Mammary epithelial cell (primary cell): ENCODE measurements at regions of chr11 and their contacts with region 1.

Region 1: GRCh38 chr11:129279326-129280026 is 87.4 kb upstream of the ARHGAP32 start:
- DNase-seq: peak; percentile 71
- H3K4me3 ChIP-seq: peak overlapping the region; percentile 68 to 73 (median 70)
- H3K27ac ChIP-seq: no peak overlapping the region
- H3K4me1 ChIP-seq: peaks cover 25% of the 10 kb centered on the region
- H3K27me3 ChIP-seq: no peaks in the 10 kb centered on the region
- CTCF ChIP-seq: no peak

Region 2: DNA sequence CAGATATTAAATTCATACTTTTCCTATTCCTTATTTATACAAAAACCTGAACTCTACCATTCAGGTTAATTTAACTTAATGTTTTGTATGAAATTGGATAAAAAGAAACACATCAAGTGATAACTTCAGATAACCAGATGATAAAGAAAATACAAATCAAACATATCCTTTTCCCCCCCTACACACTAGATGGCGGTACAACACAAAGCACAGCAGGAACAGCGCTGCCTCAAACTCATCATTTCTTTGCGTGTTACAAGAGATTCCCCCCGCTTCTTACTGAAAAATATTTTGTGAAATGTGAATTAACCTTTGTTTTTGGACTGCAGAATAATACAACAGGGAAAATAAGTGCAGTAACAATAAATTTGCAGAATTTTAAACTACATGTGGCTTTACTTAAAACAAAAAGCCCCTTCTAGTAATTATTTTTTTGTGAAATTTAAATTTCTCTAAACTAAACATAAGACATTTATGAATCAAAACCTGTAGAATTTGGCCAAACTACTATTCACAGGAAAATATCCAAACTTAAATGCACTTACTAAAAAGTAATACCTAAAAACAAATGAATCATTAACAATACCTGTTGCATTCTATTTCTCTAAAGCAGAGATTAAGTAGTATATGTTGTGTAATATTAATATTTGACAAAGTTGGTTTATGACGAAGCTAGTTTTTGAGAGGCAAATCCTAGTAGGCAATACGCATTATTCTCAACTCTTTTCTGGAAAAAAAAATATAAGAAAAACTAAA is 161.7 kb before region 1 on chr11:
- CTCF ChIA-PET with region 1: no interaction called
- dilution Hi-C with region 1: no loop called
- in situ Hi-C with region 1: no loop called
- intact Hi-C with region 1: loop called (anchors 1 kb)
- DNase-seq: peak; percentile 42
- H3K4me3 ChIP-seq: no peak overlapping the region
- H3K27ac ChIP-seq: no peak overlapping the region
- H3K4me1 ChIP-seq: peaks cover 10% of the 10 kb centered on the region
- H3K27me3 ChIP-seq: no peaks in the 10 kb centered on the region
- CTCF ChIP-seq: peak; percentile 93 to 94

Region 3: GRCh38 chr11:129143335-129143734 is 136.1 kb before region 1 on chr11:
- CTCF ChIA-PET with region 1: no interaction called
- dilution Hi-C with region 1: no loop called
- in situ Hi-C with region 1: no loop called
- intact Hi-C with region 1: loop called (anchors 10 kb)
- DNase-seq: peak; percentile 100
- H3K4me3 ChIP-seq: peak overlapping the region in 2 of 3 experiments; percentile 20 to 50
- H3K27ac ChIP-seq: peak overlapping the region; percentile 98
- H3K4me1 ChIP-seq: peaks cover 38% of the 10 kb centered on the region
- H3K27me3 ChIP-seq: no peaks in the 10 kb centered on the region
- CTCF ChIP-seq: no peak

Region 4: GRCh38 chr11:129315781-129316481 is 36.5 kb after region 1 on chr11:
- CTCF ChIA-PET with region 1: no interaction called
- dilution Hi-C with region 1: no loop called
- in situ Hi-C with region 1: no loop called
- intact Hi-C with region 1: loop called (anchors 5 kb)
- DNase-seq: peak; percentile 62
- H3K4me3 ChIP-seq: no peak overlapping the region
- H3K27ac ChIP-seq: no peak overlapping the region
- H3K4me1 ChIP-seq: peaks cover 18% of the 10 kb centered on the region
- H3K27me3 ChIP-seq: no peaks in the 10 kb centered on the region
- CTCF ChIP-seq: no peak